Common myeloid progenitor, CD34-positive (primary cell): ENCODE measurements at regions of chr15 and their contacts with region 1.

Region 1: GRCh38 chr15:52179278-52180195 is 11.7 kb downstream of the GNB5 start:
- DNase-seq: peak; percentile 82 to 95 (median 94)
- H3K4me3 ChIP-seq: peak overlapping the region; percentile 56 to 94 (median 82)
- H3K27ac ChIP-seq: peak overlapping the region; percentile 59 to 76
- H3K4me1 ChIP-seq: peaks cover 3 to 28% (median 21%) of the 10 kb centered on the region in 4 experiments
- H3K27me3 ChIP-seq: no peaks in the 10 kb centered on the region

Region 2: DNA sequence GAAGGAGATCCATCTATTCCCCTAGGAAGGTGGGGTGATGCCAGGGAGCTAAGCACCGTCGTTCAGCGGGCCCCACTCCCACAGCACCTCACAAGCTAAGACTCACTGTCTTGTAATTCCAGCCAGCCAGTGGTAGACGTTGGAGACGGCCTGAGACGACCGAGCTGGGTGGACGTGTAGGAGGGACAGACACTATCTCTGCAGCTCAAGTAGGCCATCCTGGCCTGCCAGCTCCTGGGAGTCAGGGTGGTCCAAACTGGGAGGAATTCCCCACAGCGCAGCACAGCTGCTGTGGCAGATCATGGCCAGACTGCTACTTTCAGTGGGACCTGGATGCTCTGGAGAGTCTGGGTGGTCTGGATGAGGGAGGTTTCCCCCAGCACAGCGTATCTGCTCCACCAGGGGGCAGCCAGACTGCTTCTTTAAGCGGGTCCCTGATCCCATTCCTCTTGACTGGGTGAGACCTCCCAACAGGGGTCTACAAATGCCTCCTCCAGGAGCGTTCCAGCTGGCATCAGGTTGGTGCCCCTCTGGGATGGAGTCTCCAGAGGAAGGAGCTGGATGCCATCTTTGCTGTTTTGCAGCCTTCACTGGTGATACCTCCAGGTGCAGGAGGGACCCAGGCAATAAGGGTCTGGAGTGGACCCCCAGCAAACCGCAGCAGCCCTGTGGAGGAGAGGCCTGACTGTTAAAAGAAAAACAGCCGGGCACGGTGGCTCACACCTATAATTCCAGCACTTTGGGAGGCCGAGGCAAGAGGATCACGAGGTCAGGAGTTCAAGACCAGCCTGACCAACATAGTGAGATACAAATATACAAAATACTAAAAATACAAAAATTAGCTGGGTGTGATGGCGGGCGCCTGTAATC is 16.0 kb before region 1 on chr15:
- CTCF ChIA-PET with region 1: interaction called, 42 read pairs
- POLR2A ChIA-PET with region 1: interaction called, 3 read pairs
- DNase-seq: peak in 2 of 3 donors; percentile 27 to 34
- H3K4me3 ChIP-seq: no peak overlapping the region
- H3K27ac ChIP-seq: no peak overlapping the region
- H3K4me1 ChIP-seq: no peaks in the 10 kb centered on the region
- H3K27me3 ChIP-seq: no peaks in the 10 kb centered on the region